SK-N-SH (cell line): ENCODE measurements at regions of chr3 and their contacts with region 1.

Region 1: GRCh38 chr3:127652231-127652995 is 20.3 kb upstream of the ABTB1 start:
- DNase-seq: peak; percentile 79
- H3K4me3 ChIP-seq: no peak overlapping the region; a peak in 1 of 4 replicates
- H3K27ac ChIP-seq: no peak overlapping the region
- H3K4me1 ChIP-seq: peaks cover 0 to 8% of the 10 kb centered on the region in 2 experiments; a peak in 2 of 4 replicates
- H3K27me3 ChIP-seq: no peaks in the 10 kb centered on the region
- CTCF ChIP-seq: peak; percentile 89
- EP300 ChIP-seq: no peak
- RAD21 ChIP-seq: peak; percentile 88

Region 2: GRCh38 chr3:127124120-127124519 is 528.3 kb before region 1 on chr3:
- CTCF ChIA-PET with region 1: no interaction called
- POLR2A ChIA-PET with region 1: no interaction called
- DNase-seq: no peak
- H3K4me3 ChIP-seq: no peak overlapping the region
- H3K27ac ChIP-seq: no peak overlapping the region
- H3K4me1 ChIP-seq: no peaks in the 10 kb centered on the region
- H3K27me3 ChIP-seq: no peaks in the 10 kb centered on the region; the same call in 1 of the 2 replicates
- CTCF ChIP-seq: peak; percentile 32
- EP300 ChIP-seq: no peak
- RAD21 ChIP-seq: no peak

Region 3: GRCh38 chr3:127637546-127637945 is 14.9 kb before region 1 on chr3:
- CTCF ChIA-PET with region 1: interaction called, 12 read pairs
- POLR2A ChIA-PET with region 1: interaction called, 3 read pairs
- DNase-seq: peak; percentile 71
- H3K4me3 ChIP-seq: no peak overlapping the region
- H3K27ac ChIP-seq: peak overlapping the region in 1 of 2 experiments; percentile 61; a peak in 2 of 4 replicates
- H3K4me1 ChIP-seq: peaks cover 0 to 21% of the 10 kb centered on the region in 2 experiments; a peak in 2 of 4 replicates
- H3K27me3 ChIP-seq: no peaks in the 10 kb centered on the region
- CTCF ChIP-seq: no peak
- EP300 ChIP-seq: no peak
- RAD21 ChIP-seq: peak; percentile 39; the same call in 1 of the 2 replicates

Region 4: DNA sequence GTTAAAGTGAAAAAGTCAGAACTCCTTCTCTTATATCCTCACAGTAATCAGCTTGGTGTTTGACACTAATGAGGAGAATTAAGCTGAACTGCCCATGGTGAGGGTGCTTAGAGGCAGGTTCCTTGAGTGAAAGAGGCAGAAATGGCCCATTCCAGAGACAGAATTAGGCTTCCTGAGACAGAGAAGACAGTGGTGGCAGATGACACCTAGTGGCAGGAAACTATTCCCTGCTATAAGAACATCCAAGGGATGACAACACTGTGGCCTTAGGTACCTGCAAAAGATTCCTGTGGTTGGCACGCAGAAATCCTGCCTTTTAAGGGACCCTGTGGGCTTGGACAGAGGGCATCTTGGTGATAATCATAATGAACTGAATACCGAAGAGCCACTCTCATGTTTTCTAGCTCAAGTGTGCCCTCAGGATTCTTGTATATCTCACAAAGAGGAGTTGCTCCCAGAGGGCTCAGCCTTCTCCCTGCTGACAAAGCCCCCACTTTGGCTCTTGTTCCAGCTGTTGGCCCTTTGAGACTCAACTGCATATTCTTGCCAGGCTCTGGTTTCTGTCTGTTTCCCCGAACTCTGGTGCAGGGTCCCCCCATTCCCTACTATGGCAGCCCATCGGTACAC is 318.7 kb after region 1 on chr3:
- CTCF ChIA-PET with region 1: interaction called, 14 read pairs
- POLR2A ChIA-PET with region 1: no interaction called
- DNase-seq: peak; percentile 51
- H3K4me3 ChIP-seq: peak overlapping the region in 1 of 2 experiments; percentile 33; a peak in 1 of 4 replicates
- H3K27ac ChIP-seq: no peak overlapping the region
- H3K4me1 ChIP-seq: peaks cover 0 to 9% of the 10 kb centered on the region in 2 experiments; a peak in 2 of 4 replicates
- H3K27me3 ChIP-seq: peaks cover 6% of the 10 kb centered on the region; the same call in 1 of the 2 replicates
- CTCF ChIP-seq: peak; percentile 73
- EP300 ChIP-seq: no peak
- RAD21 ChIP-seq: peak; percentile 91